ENCODE measurements at regions of chr6 and their contacts with region 1.

Region 1: DNA sequence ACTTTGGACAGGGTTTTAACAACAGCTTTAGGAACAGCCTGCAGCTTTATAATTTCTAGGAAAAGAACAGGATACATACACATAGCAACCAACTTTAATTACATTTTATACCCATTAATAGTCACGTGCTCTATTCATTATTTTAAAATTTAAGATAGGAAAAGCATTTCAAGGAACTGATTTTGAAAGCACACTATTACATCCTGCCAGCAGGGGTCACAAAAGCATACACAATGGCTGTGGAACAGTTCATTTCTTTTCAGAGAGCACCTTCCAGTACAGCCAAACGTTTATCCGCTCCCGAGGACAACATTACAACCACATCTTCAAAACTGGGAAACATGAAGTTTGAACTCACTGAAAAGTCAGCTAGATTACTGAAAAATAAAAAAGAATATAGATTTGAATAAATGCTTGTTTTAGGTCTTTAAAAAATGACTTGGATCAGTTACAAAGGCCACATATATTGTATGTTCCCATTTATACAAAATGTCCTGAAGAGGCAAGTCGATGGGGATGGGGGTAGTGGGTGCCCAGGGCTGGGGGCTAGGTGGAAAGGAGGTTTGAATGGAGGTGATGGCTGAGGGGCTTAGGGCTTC is 104.6 kb upstream of the EXOC2 start:
- DNase-seq: peak; percentile 36
- H3K4me3 ChIP-seq: peak overlapping the region in 1 of 2 experiments; percentile 42; a peak in 1 of 4 replicates
- H3K27ac ChIP-seq: no peak overlapping the region
- H3K4me1 ChIP-seq: peaks cover 0 to 4% of the 10 kb centered on the region in 2 experiments; a peak in 1 of 4 replicates
- H3K27me3 ChIP-seq: peaks cover 59% of the 10 kb centered on the region
- CTCF ChIP-seq: peak; percentile 85
- EP300 ChIP-seq: no peak
- RAD21 ChIP-seq: peak; percentile 76

Region 2: GRCh38 chr6:753486-753885 is 44.1 kb before region 1 on chr6:
- CTCF ChIA-PET with region 1: no interaction called
- POLR2A ChIA-PET with region 1: no interaction called
- DNase-seq: no peak
- H3K4me3 ChIP-seq: no peak overlapping the region
- H3K27ac ChIP-seq: no peak overlapping the region
- H3K4me1 ChIP-seq: no peaks in the 10 kb centered on the region
- H3K27me3 ChIP-seq: peaks cover 27% of the 10 kb centered on the region; the same call in 1 of the 2 replicates
- CTCF ChIP-seq: no peak
- EP300 ChIP-seq: no peak
- RAD21 ChIP-seq: no peak

Region 3: GRCh38 chr6:1381481-1382330 is 584.1 kb after region 1 on chr6:
- CTCF ChIA-PET with region 1: interaction called, 14 read pairs
- POLR2A ChIA-PET with region 1: no interaction called
- DNase-seq: peak; percentile 86
- H3K4me3 ChIP-seq: peak overlapping the region in 1 of 2 experiments; percentile 29; a peak in 1 of 4 replicates
- H3K27ac ChIP-seq: no peak overlapping the region
- H3K4me1 ChIP-seq: no peaks in the 10 kb centered on the region
- H3K27me3 ChIP-seq: peaks cover 96% of the 10 kb centered on the region
- CTCF ChIP-seq: peak; percentile 65
- EP300 ChIP-seq: no peak
- RAD21 ChIP-seq: peak; percentile 67

Region 4: DNA sequence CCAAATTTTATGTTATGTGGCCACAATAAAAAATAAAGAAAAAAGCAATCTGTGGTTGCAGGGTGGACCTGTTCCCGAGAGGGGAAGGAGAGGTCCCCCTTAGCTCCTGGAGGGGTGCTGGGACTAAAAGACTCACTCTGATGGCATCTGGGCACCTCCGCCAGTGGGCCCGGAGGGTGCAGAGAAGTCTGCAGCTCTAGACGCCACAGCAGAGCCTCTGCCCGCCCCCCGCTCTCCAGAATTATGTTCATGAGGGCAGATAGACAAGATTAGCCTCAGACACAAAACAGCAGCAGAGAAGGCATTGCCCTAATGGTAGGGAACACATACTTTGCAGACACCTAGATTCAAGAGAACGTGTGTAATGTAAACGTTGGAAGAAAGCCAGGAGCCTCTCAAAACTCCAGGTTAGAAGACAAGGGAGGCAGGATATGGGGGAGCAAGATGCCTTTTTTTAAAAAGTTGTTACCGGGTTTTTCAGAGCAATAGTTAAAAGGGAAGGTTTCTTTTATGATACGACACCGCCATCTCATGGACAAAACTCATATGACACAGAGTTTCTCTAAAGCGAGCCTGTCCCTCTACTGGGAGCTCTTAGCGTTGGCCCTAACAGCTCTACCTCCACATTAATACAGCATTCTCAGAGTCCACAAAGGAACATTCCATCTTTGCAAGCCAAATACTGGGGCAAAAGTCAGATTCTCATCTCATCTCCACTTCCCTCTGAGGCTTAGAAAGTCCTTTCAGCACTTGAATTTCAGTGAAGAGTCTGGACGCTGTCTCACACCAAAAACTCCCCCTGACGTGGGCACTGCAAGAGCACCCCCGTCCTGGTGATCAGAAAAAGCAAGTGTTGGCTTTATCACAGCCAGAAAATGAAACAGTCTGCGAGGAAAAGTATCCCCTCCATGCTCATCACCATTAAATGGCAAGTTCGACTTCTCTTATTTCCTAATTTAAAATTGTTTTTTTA is 639.0 kb after region 1 on chr6:
- CTCF ChIA-PET with region 1: interaction called, 15 read pairs
- POLR2A ChIA-PET with region 1: no interaction called
- DNase-seq: peak; percentile 71
- H3K4me3 ChIP-seq: peak overlapping the region in 1 of 2 experiments; percentile 17; a peak in 1 of 4 replicates
- H3K27ac ChIP-seq: no peak overlapping the region
- H3K4me1 ChIP-seq: no peaks in the 10 kb centered on the region
- H3K27me3 ChIP-seq: peaks cover 40% of the 10 kb centered on the region
- CTCF ChIP-seq: peak; percentile 75
- EP300 ChIP-seq: no peak
- RAD21 ChIP-seq: peak; percentile 81